PC-3 (cell line): ENCODE measurements at regions of chr7 and their contacts with region 1.

Region 1: DNA sequence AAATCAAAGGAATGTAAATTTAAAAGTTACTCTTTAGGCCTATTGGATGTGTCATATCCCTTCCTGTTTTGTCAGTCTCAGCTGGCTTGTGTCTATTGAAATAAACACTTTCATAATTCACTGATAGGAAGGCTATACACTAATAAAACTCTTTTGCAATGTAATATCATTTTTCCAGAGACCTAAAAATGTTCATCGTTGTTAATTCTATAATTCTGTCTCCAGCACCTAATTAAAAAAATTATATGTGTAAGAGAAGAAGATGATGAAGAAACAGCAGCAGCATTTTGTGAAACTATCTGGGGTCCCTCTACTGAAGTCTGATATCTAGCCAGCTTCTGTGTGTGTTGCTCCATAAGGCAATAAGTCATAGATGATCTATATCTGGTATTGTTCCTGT is 602.7 kb downstream of the ETV1 start:
- DNase-seq: no peak
- ATAC-seq: no peak
- H3K4me3 ChIP-seq: no peak overlapping the region
- H3K27ac ChIP-seq: no peak overlapping the region
- H3K4me1 ChIP-seq: no peaks in the 10 kb centered on the region
- H3K27me3 ChIP-seq: no peaks in the 10 kb centered on the region
- CTCF ChIP-seq: no peak

Region 2: DNA sequence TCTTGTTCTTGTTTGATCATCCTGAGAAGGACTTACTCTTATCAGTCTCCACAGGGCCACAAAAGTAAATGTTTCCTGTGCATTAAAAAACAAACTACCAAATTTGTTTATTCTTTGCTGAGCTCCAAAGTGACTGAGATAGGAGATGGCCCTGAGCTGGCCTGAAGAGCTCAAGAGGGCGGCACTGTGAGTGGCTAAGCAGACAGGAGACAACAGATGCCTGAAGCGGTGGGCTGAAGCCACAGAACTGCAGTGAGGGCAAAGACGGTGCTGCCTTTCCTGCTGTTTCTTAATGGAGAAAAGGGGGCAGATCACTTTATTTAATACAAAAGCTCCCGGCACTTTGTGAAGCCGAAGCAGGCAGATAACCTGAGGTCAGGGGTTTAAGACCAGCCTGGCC is 319.7 kb before region 1 on chr7:
- CTCF ChIA-PET with region 1: no interaction called
- POLR2A ChIA-PET with region 1: interaction called, 17 read pairs
- intact Hi-C with region 1: no loop called
- DNase-seq: no peak
- ATAC-seq: no peak
- H3K4me3 ChIP-seq: no peak overlapping the region
- H3K27ac ChIP-seq: no peak overlapping the region
- H3K4me1 ChIP-seq: no peaks in the 10 kb centered on the region
- H3K27me3 ChIP-seq: no peaks in the 10 kb centered on the region
- CTCF ChIP-seq: no peak